Heart right ventricle (tissue), 16 donors: ENCODE measurements at regions of chr5 and their contacts with region 1.

Region 1: GRCh38 chr5:135185481-135186065 is 151.5 kb upstream of the PITX1 start:
- DNase-seq: no peak
- ATAC-seq: no peak
- H3K4me3 ChIP-seq: no peak overlapping the region
- H3K27ac ChIP-seq: no peak overlapping the region
- H3K4me1 ChIP-seq: no peaks in the 10 kb centered on the region
- H3K27me3 ChIP-seq: peaks cover 0 to 49% (median 34%) of the 10 kb centered on the region in 7 donors
- CTCF ChIP-seq: no peak

Region 2: GRCh38 chr5:135034236-135034962 is 151.2 kb before region 1 on chr5:
- intact Hi-C with region 1: loop called in 1 of 10 experiments (anchors 10 kb)
- DNase-seq: no peak
- ATAC-seq: peak in 2 of 8 donors; percentile 3 to 11
- H3K4me3 ChIP-seq: peak overlapping the region in 9 of 10 donors; percentile 12 to 57 (median 31)
- H3K27ac ChIP-seq: no peak overlapping the region
- H3K4me1 ChIP-seq: peaks cover 13 to 55% (median 41%) of the 10 kb centered on the region in 9 donors
- H3K27me3 ChIP-seq: peaks cover 53 to 100% (median 98%) of the 10 kb centered on the region in 7 donors
- CTCF ChIP-seq: no peak

Region 3: DNA sequence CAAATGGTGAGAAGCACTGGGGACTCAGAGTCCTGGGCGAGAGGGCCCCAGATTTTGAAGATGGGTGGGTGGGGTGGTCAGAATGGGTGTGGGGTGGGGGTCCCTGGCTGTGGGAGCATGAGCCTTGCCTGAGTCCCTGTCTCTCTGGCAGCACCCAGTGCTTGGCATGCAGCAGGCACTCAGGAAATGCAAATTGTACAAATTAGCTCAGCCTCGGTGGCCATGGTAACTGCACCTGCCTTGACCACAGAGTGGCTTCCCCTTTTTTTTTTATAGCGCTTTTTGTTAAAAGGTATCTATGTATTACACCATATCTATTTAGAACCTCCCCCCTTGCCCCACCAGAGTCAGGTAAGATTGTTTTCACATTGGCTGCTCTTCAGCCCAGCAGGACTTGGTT is 132.3 kb before region 1 on chr5:
- intact Hi-C with region 1: loop called in 3 of 10 experiments (anchors 5 to 10 kb)
- DNase-seq: no peak
- ATAC-seq: no peak
- H3K4me3 ChIP-seq: no peak overlapping the region
- H3K27ac ChIP-seq: no peak overlapping the region
- H3K4me1 ChIP-seq: peaks cover 0 to 13% (median 0%) of the 10 kb centered on the region in 9 donors
- H3K27me3 ChIP-seq: peaks cover 6 to 62% (median 55%) of the 10 kb centered on the region in 7 donors
- CTCF ChIP-seq: no peak

Region 4: DNA sequence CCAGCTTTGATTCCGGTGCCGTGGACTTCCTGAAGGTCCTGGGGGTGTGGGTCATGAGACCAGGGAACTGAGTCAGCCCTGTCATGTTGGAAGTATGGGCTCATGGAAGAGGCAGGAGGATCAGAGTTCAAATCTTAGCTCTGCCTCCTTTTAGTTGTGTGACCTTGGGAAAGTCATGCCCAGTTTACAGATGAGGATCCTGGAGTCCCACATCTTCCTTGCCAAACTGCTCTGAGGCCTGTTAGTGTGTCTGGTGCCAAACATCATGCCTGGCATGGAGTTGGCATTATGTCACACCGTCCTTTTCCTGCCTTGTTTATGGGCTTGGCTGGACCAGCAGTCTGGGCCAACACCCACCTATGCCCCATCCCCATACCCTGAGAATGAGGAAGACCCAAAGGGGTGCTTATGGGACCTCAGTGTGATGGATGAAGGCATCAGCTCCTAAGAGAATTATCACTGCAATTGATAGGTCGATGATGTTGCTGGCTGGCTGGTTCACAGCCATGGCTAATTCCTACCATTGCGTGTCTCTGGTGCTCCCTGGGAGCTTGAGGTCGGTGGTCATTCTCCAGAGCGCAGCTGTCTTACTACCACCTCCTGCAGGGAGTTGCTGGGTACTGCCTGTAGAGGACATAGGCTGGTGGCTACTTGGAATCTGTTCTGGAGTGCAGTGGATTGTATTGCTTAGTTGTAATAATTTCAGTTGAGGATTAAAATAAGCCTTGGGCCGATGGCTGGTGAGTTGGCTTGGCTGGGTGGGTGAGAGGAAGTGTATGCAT is 11.1 kb before region 1 on chr5:
- intact Hi-C with region 1: no loop called
- DNase-seq: no peak
- ATAC-seq: no peak
- H3K4me3 ChIP-seq: no peak overlapping the region
- H3K27ac ChIP-seq: no peak overlapping the region
- H3K4me1 ChIP-seq: no peaks in the 10 kb centered on the region
- H3K27me3 ChIP-seq: peaks cover 0 to 56% (median 42%) of the 10 kb centered on the region in 7 donors
- CTCF ChIP-seq: no peak

Region 5: GRCh38 chr5:135508482-135509005 is 323.0 kb after region 1 on chr5:
- intact Hi-C with region 1: no loop called
- DNase-seq: no peak
- ATAC-seq: no peak
- H3K4me3 ChIP-seq: no peak overlapping the region
- H3K27ac ChIP-seq: no peak overlapping the region
- H3K4me1 ChIP-seq: no peaks in the 10 kb centered on the region
- H3K27me3 ChIP-seq: peaks cover 0 to 85% (median 75%) of the 10 kb centered on the region in 7 donors
- CTCF ChIP-seq: no peak